Activated naive CD4-positive, alpha-beta T cell treated with anti-CD3 and anti-CD28 coated beads for 36 hours (primary cell): ENCODE measurements at regions of chr3 and their contacts with region 1.

Region 1: DNA sequence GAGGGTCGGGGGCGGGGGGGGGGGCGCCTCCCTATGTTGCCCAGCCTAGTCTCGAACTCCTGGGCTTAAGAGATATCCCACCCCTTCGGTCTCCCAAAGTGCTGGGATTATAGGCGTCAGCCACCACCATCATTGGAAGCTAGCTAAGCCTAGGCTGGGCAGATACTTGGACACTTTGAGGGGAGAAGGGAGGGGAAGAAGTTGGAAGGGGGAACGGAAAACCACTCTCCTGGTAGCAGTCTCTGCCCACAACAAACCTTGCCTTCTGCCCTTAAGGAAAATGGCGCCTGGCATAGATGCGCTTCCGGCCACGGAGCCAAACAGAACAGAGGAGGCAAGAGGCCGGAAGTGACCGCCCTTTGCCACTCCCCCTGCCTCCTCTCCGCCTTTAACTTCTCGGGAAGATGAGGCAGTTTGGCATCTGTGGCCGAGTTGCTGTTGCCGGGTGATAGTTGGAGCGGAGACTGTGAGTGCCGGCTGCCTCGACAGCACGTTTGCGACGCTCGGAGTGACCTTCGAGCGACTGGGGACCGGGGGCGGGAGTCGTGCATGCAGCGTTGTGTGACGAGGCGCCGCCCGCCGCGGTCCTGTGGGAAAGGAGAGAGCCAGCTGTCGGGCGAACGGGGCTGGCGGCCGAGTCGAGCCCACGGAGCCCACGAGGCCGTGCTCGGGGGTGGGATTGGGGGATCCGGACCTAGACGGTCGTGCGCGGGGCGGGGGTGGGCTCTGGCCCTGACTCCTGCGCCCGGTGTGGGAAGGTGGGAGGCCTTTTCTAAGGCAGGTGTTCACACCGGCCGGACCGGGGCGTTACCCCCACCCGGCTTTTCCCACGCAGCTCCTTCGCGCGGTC is at the start of gene MFN1:
- DNase-seq: peak; percentile 94
- H3K4me3 Mint-ChIP-seq: peak within 1 kb of the TSS; percentile 91
- H3K27ac Mint-ChIP-seq: peak within 1 kb of the TSS; percentile 91
- H3K4me1 Mint-ChIP-seq: peaks cover 13% of the 10 kb centered on the region
- H3K27me3 Mint-ChIP-seq: no peaks in the 10 kb centered on the region
- total RNA-seq, gene MFN1: 23.0 to 23.1 TPM

Region 2: DNA sequence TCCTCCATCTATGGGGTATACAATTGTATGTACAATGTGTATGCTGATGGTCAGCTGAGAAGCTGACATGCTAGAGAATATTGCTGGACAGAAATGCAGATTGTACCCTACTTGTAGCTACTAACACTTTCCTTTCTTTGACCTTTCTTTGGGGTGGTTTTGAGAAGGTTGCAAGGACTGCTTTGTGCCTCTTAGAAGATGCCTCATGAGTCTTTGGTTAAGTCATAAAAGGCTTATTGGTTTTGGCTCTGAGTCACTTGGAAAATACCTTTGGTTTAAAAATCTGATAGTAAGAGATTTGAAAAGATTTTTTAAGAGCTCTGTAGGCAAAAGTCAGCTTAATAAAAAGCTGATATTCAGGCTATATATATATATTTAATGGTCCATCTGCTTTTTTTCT is 347.4 kb before region 1 on chr3:
- CTCF ChIA-PET with region 1: no interaction called
- intact Hi-C with region 1: no loop called
- DNase-seq: peak; percentile 12
- H3K4me3 Mint-ChIP-seq: no peak overlapping the region
- H3K27ac Mint-ChIP-seq: no peak overlapping the region
- H3K4me1 Mint-ChIP-seq: peaks cover 11% of the 10 kb centered on the region
- H3K27me3 Mint-ChIP-seq: no peaks in the 10 kb centered on the region

Region 3: DNA sequence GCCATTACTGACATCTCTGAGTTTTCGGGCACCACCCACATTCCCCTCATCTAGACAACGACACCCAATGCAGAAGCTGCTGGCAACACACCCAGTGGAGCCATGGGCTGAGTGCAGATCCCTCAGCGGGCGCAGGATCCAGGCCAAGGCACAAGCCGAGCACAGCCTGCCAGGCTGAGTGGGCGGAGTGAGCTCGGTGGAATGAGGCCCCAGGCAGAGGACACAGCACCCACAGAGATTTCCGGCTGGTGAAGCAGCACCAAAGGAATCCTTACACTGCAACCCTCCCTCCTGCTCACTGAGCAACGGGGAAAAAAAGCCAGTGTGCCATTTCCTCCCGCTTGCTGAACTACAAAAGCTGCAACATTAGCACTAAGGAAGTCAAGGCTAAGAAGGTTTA is 310.2 kb before region 1 on chr3:
- CTCF ChIA-PET with region 1: no interaction called
- intact Hi-C with region 1: loop called (anchors 1 kb)
- DNase-seq: peak; percentile 82
- H3K4me3 Mint-ChIP-seq: peak overlapping the region; percentile 61
- H3K27ac Mint-ChIP-seq: peak overlapping the region; percentile 77
- H3K4me1 Mint-ChIP-seq: peaks cover 11% of the 10 kb centered on the region
- H3K27me3 Mint-ChIP-seq: no peaks in the 10 kb centered on the region

Region 4: DNA sequence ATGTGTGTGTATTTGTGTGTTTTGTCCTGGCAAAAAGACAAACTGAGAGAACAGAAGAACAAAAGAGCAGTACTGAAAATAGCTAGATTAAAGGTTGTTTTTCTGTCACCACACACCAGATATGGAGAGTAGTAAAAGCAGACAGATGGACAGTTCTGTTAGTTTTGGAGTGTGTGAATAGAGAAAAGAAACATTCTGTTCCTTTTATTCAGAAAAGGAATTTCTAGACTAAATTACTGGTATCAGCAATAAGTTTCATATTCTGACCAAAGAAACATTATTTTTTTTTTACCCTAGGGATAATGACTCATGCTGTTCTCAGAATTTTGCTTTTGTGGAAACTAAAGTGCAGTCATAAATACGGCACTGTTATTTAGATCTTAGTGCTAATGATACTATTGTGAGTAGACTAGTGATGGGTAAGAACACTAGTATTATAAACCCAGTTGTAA is 166.5 kb before region 1 on chr3:
- CTCF ChIA-PET with region 1: no interaction called
- intact Hi-C with region 1: loop called (anchors 1 kb)
- DNase-seq: no peak
- H3K4me3 Mint-ChIP-seq: no peak overlapping the region
- H3K27ac Mint-ChIP-seq: no peak overlapping the region
- H3K4me1 Mint-ChIP-seq: peaks cover 47% of the 10 kb centered on the region
- H3K27me3 Mint-ChIP-seq: no peaks in the 10 kb centered on the region

Region 5: GRCh38 chr3:179451265-179452175 is 104.0 kb after region 1 on chr3 and contains the start of gene GNB4:
- CTCF ChIA-PET with region 1: no interaction called
- intact Hi-C with region 1: loop called (anchors 1 kb)
- DNase-seq: peak; percentile 49
- H3K4me3 Mint-ChIP-seq: peak within 1 kb of the TSS; percentile 70
- H3K27ac Mint-ChIP-seq: no peak within 1 kb of the TSS
- H3K4me1 Mint-ChIP-seq: peaks cover 13% of the 10 kb centered on the region
- H3K27me3 Mint-ChIP-seq: peaks cover 70% of the 10 kb centered on the region
- total RNA-seq, gene GNB4: 0.26 to 0.74 TPM

Region 6: DNA sequence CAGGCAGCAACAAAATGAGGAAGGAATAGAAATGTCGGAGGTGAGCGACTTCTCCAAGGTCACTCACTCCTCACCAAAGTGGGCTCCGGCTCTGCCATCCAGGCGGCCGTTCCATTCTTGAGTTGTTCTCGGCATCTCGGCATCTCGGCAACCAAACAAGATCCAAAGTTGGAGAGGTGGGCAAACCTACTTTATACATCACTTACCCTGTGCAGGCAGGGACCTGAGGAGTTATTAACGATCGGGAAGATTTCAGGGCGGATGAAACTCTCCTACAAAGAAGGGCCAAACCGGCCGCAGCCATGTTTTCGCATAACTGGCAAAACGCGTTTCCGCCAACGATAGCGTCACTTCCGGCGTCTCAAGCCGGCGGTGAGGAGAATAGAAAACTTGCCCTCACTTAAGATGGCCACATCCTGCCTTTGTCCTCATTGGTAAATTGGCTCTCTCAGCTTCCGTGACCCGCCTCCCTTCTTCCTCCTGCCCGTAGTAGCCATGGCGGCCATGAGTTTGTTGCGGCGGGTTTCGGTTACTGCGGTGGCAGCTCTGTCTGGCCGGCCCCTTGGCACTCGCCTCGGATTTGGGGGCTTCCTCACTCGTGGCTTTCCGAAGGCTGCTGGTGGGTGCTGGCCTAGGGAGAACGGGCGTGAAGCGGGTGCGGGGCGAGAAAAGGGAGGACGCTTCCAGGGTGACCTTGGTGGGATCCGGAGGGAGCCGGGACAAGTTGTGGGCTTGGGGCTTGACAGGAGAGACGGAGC is 256.9 kb after region 1 on chr3 and contains the starts of genes MRPL47 and NDUFB5:
- CTCF ChIA-PET with region 1: no interaction called
- intact Hi-C with region 1: loop called (anchors 1 kb)
- DNase-seq: peak; percentile 96
- H3K4me3 Mint-ChIP-seq: peak within 1 kb of the TSS; percentile 100
- H3K27ac Mint-ChIP-seq: peak within 1 kb of the TSS; percentile 99
- H3K4me1 Mint-ChIP-seq: peaks cover 48% of the 10 kb centered on the region
- H3K27me3 Mint-ChIP-seq: no peaks in the 10 kb centered on the region
- total RNA-seq, gene MRPL47: 48.8 to 50.4 TPM
- total RNA-seq, gene NDUFB5: 148 to 151 TPM

Region 7: DNA sequence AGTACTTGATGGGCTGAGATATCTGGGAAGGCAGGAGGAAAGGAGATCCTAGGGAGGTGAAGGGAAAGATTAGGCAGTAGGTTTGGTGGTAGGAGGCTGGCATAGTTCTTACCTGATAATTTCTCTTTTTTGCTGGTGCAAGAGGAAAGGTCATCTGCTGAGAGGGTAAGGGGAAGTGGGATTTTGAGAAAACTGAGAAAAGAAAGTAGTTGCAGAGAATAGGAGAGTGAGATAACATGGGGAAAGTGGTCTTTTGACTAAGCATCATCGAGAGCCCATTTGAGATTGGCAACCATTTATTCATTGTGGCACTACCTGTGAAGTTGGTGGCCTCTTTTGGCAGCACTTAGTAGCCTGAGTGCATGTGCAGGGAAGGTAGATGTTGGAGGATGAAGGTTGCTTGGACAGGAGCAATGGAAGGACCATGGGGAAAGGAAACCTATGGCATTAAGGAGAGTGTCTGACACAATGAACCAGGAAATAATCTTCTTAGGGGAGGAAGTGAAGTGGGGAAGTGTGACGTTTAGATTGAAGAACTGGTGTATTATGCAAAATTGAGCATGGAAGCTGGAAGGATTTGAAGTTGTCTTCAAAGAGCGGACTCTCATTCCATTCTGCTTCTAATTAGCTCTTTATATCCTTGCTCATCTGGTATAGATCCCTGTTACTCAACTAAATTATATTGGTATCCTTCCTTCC is 283.3 kb after region 1 on chr3:
- CTCF ChIA-PET with region 1: no interaction called
- intact Hi-C with region 1: no loop called
- DNase-seq: no peak
- H3K4me3 Mint-ChIP-seq: no peak overlapping the region
- H3K27ac Mint-ChIP-seq: no peak overlapping the region
- H3K4me1 Mint-ChIP-seq: no peaks in the 10 kb centered on the region
- H3K27me3 Mint-ChIP-seq: no peaks in the 10 kb centered on the region

Region 8: DNA sequence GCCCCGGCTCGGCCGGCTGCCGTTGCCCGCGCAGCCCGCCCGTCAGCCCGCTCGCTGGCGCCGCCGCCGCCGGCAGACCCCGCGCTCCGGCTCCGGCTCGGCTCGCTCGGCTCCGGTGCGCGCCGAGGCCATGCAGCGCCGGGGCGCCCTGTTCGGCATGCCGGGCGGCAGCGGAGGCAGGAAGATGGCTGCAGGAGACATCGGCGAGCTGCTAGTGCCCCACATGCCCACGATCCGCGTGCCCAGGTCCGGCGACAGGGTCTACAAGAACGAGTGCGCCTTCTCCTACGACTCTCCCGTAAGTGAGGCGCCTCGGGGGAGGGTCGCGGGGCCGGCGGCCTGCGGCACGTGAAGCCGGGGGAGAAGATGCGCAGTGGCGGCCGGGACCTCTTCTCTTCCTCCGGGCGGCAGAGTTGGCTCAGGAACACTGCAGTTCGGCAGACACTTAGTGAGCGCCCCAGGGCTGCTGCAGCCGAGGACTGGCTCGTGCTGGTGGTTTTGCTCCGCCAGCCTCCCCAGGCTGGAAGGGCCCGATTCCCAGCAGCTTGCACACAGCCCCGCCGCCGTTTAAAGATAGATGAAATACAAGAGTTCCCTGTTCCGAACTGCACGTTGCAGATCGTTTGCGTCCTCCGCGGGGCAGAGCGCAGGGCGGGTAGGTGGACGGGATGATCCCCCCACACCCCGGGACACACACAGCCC is 305.7 kb after region 1 on chr3:
- CTCF ChIA-PET with region 1: no interaction called
- intact Hi-C with region 1: loop called (anchors 5 kb)
- DNase-seq: peak; percentile 72
- H3K4me3 Mint-ChIP-seq: peak overlapping the region; percentile 85
- H3K27ac Mint-ChIP-seq: peak overlapping the region; percentile 67
- H3K4me1 Mint-ChIP-seq: peaks cover 17% of the 10 kb centered on the region
- H3K27me3 Mint-ChIP-seq: peaks cover 8% of the 10 kb centered on the region